Heart left ventricle (tissue), 16 donors: ENCODE measurements at regions of chr1 and their contacts with region 1.

Region 1: DNA sequence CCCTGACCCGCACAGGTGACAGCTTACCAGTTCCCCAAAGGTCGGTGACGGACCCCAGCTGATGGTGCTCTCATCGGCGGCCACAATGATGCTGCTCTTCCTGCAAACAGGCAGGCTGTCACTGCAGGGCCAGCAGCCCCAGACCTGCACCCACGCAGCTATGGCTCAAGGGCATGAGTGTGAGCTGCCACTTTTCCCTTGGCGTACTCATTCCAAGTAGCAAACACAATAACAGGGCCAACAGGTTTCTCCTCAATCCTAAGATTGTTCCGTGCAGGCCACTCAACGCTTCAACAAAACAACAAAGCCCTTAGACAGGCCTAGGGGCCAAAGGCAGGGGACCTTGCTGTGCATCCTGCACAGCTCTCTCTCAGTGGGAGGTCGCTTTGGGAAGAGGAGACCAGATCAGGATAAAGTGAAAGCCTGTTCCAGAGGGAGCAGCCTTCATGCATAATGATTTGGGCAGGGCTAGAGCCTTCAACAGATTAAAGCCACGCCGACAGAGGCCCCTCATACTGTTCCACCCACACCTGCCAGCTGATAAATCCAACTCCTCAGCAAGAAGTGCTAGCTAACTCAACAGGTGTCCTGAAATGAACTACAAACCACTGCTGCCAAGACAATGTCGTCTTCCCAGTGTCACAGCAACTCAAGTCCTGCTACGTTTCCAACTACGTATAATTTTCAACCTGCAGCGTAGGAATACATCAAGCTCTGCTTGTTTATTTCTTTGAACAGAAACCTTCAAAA is 27.2 kb downstream of the RCC2 start:
- DNase-seq: no peak
- ATAC-seq: peak in 1 of 4 donors; percentile 17
- H3K4me3 ChIP-seq: no peak overlapping the region
- H3K27ac ChIP-seq: no peak overlapping the region
- H3K4me1 ChIP-seq: peaks cover 0 to 6% (median 0%) of the 10 kb centered on the region in 12 donors
- H3K27me3 ChIP-seq: no peaks in the 10 kb centered on the region
- CTCF ChIP-seq: no peak
- POLR2A ChIP-seq: no peak

Region 2: GRCh38 chr1:17170571-17170970 is 241.7 kb before region 1 on chr1:
- intact Hi-C with region 1: no loop called
- DNase-seq: no peak
- ATAC-seq: no peak
- H3K4me3 ChIP-seq: no peak overlapping the region
- H3K27ac ChIP-seq: no peak overlapping the region
- H3K4me1 ChIP-seq: no peaks in the 10 kb centered on the region
- H3K27me3 ChIP-seq: peaks cover 0 to 25% (median 4%) of the 10 kb centered on the region in 9 donors
- CTCF ChIP-seq: no peak
- POLR2A ChIP-seq: no peak

Region 3: GRCh38 chr1:17348125-17348979 is 63.9 kb before region 1 on chr1:
- intact Hi-C with region 1: no loop called
- DNase-seq: no peak
- ATAC-seq: no peak
- H3K4me3 ChIP-seq: no peak overlapping the region
- H3K27ac ChIP-seq: no peak overlapping the region
- H3K4me1 ChIP-seq: no peaks in the 10 kb centered on the region
- H3K27me3 ChIP-seq: peaks cover 0 to 51% (median 2%) of the 10 kb centered on the region in 9 donors
- CTCF ChIP-seq: no peak
- POLR2A ChIP-seq: no peak

Region 4: GRCh38 chr1:17485280-17485679 is 73.0 kb after region 1 on chr1:
- intact Hi-C with region 1: loop called in 1 of 10 experiments (anchors 5 kb)
- DNase-seq: peak in 1 of 5 donors; percentile 17
- ATAC-seq: no peak
- H3K4me3 ChIP-seq: no peak overlapping the region
- H3K27ac ChIP-seq: no peak overlapping the region
- H3K4me1 ChIP-seq: no peaks in the 10 kb centered on the region
- H3K27me3 ChIP-seq: peaks cover 0 to 11% (median 0%) of the 10 kb centered on the region in 9 donors
- CTCF ChIP-seq: peak in 10 of 12 donors; percentile 9 to 46 (median 28)
- POLR2A ChIP-seq: no peak